ENCODE measurements at regions of chr15 and their contacts with region 1.

Region 1: GRCh38 chr15:48861813-48862431 is 16.0 kb upstream of the EID1 start:
- DNase-seq: peak; percentile 44
- H3K4me3 ChIP-seq: no peak overlapping the region
- CTCF ChIP-seq: peak; percentile 53

Region 2: DNA sequence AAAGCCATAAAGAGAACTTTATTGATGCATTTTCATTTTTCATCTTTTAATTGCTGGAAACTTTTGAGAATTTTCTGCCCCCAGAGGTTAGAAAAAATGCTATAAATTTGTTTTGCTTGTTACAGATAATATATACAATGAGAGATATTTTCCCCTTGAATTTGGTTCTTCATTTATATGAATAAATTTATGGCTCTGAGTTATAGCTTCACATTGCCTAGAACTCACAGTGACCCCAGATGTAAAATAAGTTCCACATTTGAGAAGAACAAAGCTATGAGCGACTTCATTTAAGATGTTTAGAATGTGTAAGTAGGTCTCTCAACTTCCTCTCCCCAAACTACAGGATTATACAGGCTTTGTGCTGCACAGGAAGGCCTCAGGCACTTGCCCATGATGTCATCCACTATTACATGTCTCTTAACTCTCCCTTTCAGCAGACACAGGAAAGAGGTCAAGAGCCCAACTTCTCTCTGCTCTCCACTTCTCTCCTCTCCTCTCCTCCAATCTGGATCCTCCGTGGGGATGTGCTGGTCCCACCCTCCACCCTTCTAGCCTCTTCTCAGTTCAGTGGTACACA is 437.9 kb before region 1 on chr15:
- CTCF ChIA-PET with region 1: no interaction called
- POLR2A ChIA-PET with region 1: no interaction called
- DNase-seq: no peak
- H3K4me3 ChIP-seq: no peak overlapping the region
- CTCF ChIP-seq: no peak

Region 3: GRCh38 chr15:48717458-48717857 is 144.5 kb before region 1 on chr15:
- CTCF ChIA-PET with region 1: interaction called, 57 read pairs
- POLR2A ChIA-PET with region 1: no interaction called
- DNase-seq: no peak
- H3K4me3 ChIP-seq: no peak overlapping the region
- CTCF ChIP-seq: peak; percentile 8

Region 4: GRCh38 chr15:48984811-48985352 is 123.0 kb after region 1 on chr15:
- CTCF ChIA-PET with region 1: interaction called, 20 read pairs
- POLR2A ChIA-PET with region 1: no interaction called
- DNase-seq: no peak
- H3K4me3 ChIP-seq: no peak overlapping the region
- CTCF ChIP-seq: no peak

Region 5: GRCh38 chr15:49082960-49083359 is 221.0 kb after region 1 on chr15:
- CTCF ChIA-PET with region 1: interaction called, 12 read pairs
- POLR2A ChIA-PET with region 1: no interaction called
- DNase-seq: peak; percentile 79
- H3K4me3 ChIP-seq: no peak overlapping the region
- CTCF ChIP-seq: no peak

Region 6: GRCh38 chr15:49155110-49155833 is 293.4 kb after region 1 on chr15 and contains the start of gene COPS2:
- CTCF ChIA-PET with region 1: interaction called, 10 read pairs
- POLR2A ChIA-PET with region 1: no interaction called
- DNase-seq: peak; percentile 94
- H3K4me3 ChIP-seq: peak within 1 kb of the TSS; percentile 76
- CTCF ChIP-seq: no peak

Region 7: GRCh38 chr15:50145451-50145872 is 1283.5 kb after region 1 on chr15:
- CTCF ChIA-PET with region 1: interaction called, 19 read pairs
- POLR2A ChIA-PET with region 1: no interaction called
- DNase-seq: peak; percentile 24
- H3K4me3 ChIP-seq: no peak overlapping the region
- CTCF ChIP-seq: no peak

Measured in AG04449 (cell line).